Caco-2 (cell line): ENCODE measurements at regions of chr2 and their contacts with region 1.

Region 1: GRCh38 chr2:36663851-36664695 is 32.4 kb upstream of the VIT start:
- DNase-seq: peak in 1 of 2 experiments; percentile 69
- H3K4me3 ChIP-seq: no peak overlapping the region
- H3K4me3 Mint-ChIP-seq: no peak overlapping the region
- H3K27ac Mint-ChIP-seq: no peak overlapping the region
- H3K4me1 ChIP-seq: peaks cover 23% of the 10 kb centered on the region
- H3K4me1 Mint-ChIP-seq: peaks cover 6% of the 10 kb centered on the region
- H3K27me3 ChIP-seq: no peaks in the 10 kb centered on the region
- H3K27me3 Mint-ChIP-seq: no peaks in the 10 kb centered on the region
- CTCF ChIP-seq: peak; percentile 70 to 85

Region 2: GRCh38 chr2:35973132-35973736 is 690.8 kb before region 1 on chr2:
- CTCF ChIA-PET with region 1: no interaction called
- POLR2A ChIA-PET with region 1: no interaction called
- intact Hi-C with region 1: loop called (anchors 5 kb)
- DNase-seq: peak in 1 of 2 experiments; percentile 39
- H3K4me3 ChIP-seq: no peak overlapping the region
- H3K4me3 Mint-ChIP-seq: no peak overlapping the region
- H3K27ac Mint-ChIP-seq: no peak overlapping the region
- H3K4me1 ChIP-seq: no peaks in the 10 kb centered on the region
- H3K4me1 Mint-ChIP-seq: no peaks in the 10 kb centered on the region
- H3K27me3 ChIP-seq: no peaks in the 10 kb centered on the region
- H3K27me3 Mint-ChIP-seq: peaks cover 7% of the 10 kb centered on the region
- CTCF ChIP-seq: peak; percentile 79 to 81

Region 3: GRCh38 chr2:36277146-36277808 is 386.8 kb before region 1 on chr2:
- CTCF ChIA-PET with region 1: no interaction called
- POLR2A ChIA-PET with region 1: no interaction called
- intact Hi-C with region 1: loop called (anchors 5 kb)
- DNase-seq: no peak
- H3K4me3 ChIP-seq: no peak overlapping the region
- H3K4me3 Mint-ChIP-seq: no peak overlapping the region
- H3K27ac Mint-ChIP-seq: no peak overlapping the region
- H3K4me1 ChIP-seq: peaks cover 5% of the 10 kb centered on the region; the same call in 1 of the 2 replicates
- H3K4me1 Mint-ChIP-seq: no peaks in the 10 kb centered on the region
- H3K27me3 ChIP-seq: no peaks in the 10 kb centered on the region
- H3K27me3 Mint-ChIP-seq: peaks cover 3% of the 10 kb centered on the region
- CTCF ChIP-seq: no peak

Region 4: DNA sequence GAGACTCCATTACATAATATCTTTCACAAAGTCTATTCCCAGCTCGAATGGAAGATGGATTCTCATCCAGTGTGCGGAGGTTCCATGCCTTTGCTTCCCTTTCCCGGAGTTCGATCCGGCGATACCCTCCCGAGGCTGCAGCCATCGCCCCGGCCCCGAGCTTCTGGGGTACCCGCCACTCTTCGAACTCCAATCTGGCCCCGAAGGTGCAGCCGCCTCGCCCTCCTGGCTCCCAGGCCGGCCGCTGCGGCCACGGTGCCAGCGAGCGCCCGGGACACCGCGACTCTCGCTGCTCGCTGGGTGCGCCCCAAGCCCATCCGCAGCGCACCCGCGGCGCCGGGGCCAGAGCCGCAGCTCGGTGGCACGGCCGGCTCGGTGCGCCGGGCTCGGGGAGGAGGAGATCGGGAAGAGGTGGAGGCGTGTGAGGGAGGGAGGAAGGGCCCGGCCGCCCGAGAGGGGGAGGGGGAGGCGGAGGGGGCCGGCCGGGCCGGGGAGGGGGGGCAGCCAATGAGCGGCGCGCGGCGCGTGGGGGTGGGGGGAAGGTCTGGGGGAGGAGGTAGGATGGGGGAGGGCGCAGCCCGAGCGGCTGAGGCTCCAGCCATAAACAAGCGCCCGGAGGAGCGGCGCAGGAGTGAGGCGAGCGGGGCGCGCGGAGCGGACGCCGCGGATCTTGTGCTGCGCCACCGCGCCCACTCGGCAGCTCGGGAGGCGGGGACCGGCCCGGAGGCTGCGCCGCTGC is 308.8 kb before region 1 on chr2 and contains the start of gene CRIM1:
- CTCF ChIA-PET with region 1: interaction called, 4 read pairs
- POLR2A ChIA-PET with region 1: no interaction called
- intact Hi-C with region 1: loop called (anchors 1 kb)
- DNase-seq: peak; percentile 89 to 91
- H3K4me3 ChIP-seq: peak within 1 kb of the TSS; percentile 97
- H3K4me3 Mint-ChIP-seq: peak within 1 kb of the TSS; percentile 97
- H3K27ac Mint-ChIP-seq: peak within 1 kb of the TSS; percentile 93
- H3K4me1 ChIP-seq: peaks cover 48% of the 10 kb centered on the region
- H3K4me1 Mint-ChIP-seq: peaks cover 56% of the 10 kb centered on the region
- H3K27me3 ChIP-seq: no peaks in the 10 kb centered on the region
- H3K27me3 Mint-ChIP-seq: no peaks in the 10 kb centered on the region
- CTCF ChIP-seq: no peak
- total RNA-seq, gene CRIM1: 270 and 292 TPM in 2 replicates

Region 5: GRCh38 chr2:36561237-36561944 is 102.7 kb before region 1 on chr2:
- CTCF ChIA-PET with region 1: interaction called, 9 read pairs
- POLR2A ChIA-PET with region 1: no interaction called
- intact Hi-C with region 1: loop called (anchors 1 kb)
- DNase-seq: peak in 1 of 2 experiments; percentile 54
- H3K4me3 ChIP-seq: no peak overlapping the region
- H3K4me3 Mint-ChIP-seq: peak overlapping the region; percentile 35
- H3K27ac Mint-ChIP-seq: peak overlapping the region; percentile 89
- H3K4me1 ChIP-seq: peaks cover 54% of the 10 kb centered on the region
- H3K4me1 Mint-ChIP-seq: peaks cover 38% of the 10 kb centered on the region
- H3K27me3 ChIP-seq: no peaks in the 10 kb centered on the region
- H3K27me3 Mint-ChIP-seq: no peaks in the 10 kb centered on the region
- CTCF ChIP-seq: no peak

Region 6: GRCh38 chr2:36618028-36618780 is 45.9 kb before region 1 on chr2:
- CTCF ChIA-PET with region 1: interaction called, 3 read pairs
- POLR2A ChIA-PET with region 1: no interaction called
- intact Hi-C with region 1: loop called (anchors 2 kb)
- DNase-seq: peak; percentile 83 to 86
- H3K4me3 ChIP-seq: no peak overlapping the region
- H3K4me3 Mint-ChIP-seq: no peak overlapping the region
- H3K27ac Mint-ChIP-seq: peak overlapping the region; percentile 26
- H3K4me1 ChIP-seq: peaks cover 12% of the 10 kb centered on the region
- H3K4me1 Mint-ChIP-seq: peaks cover 24% of the 10 kb centered on the region
- H3K27me3 ChIP-seq: no peaks in the 10 kb centered on the region
- H3K27me3 Mint-ChIP-seq: no peaks in the 10 kb centered on the region
- CTCF ChIP-seq: no peak